ENCODE measurements at regions of chr10 and their contacts with region 1.

Region 1: DNA sequence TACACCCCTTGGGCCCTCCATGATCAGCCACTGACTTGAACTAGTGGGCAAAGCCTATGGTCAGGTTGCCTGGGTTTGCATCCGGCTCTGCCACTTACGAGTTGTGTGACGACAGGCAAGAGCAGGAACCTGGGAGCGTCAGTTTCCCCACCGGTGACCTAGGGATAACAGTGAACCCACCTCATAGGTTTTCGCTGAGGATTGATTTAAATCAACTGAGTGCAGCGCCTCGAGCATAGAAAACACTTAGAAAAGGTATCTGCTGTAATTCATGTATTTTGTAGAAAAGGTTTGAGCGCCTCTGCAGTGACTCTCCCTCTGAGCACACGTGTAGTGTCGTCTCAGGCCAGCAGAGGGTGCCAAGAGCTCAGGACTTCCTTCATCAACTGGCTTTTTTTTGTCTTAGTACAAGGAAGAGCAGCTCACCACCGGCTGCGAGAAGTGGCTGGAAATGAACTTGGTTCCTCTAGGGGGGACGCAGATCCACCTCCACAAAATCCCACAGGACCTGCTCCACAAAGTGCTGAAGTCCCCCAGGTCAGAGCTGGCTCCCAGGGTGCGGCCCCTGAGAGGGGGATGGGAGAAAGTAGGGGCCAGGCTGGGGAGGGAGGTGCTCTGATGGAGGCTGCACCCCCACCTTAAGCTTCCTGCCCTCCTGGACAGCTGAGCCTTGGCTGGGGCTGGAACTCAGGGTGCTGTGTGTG is 27.7 kb downstream of the BTBD16 start:
- DNase-seq: peak; percentile 39 to 65 (median 48)
- H3K4me3 ChIP-seq: no peak overlapping the region
- H3K4me3 Mint-ChIP-seq: peak overlapping the region in 5 of 7 donors; percentile 35 to 86 (median 59)
- H3K27ac ChIP-seq: no peak overlapping the region
- H3K27ac Mint-ChIP-seq: peak overlapping the region in 5 of 8 donors; percentile 7 to 92 (median 52)
- H3K4me1 ChIP-seq: peaks cover 13% of the 10 kb centered on the region
- H3K4me1 Mint-ChIP-seq: peaks cover 12 to 20% (median 13%) of the 10 kb centered on the region in 3 donors
- H3K27me3 ChIP-seq: no peaks in the 10 kb centered on the region
- H3K27me3 Mint-ChIP-seq: peaks cover 6 to 14% of the 10 kb centered on the region in 2 donors

Region 2: DNA sequence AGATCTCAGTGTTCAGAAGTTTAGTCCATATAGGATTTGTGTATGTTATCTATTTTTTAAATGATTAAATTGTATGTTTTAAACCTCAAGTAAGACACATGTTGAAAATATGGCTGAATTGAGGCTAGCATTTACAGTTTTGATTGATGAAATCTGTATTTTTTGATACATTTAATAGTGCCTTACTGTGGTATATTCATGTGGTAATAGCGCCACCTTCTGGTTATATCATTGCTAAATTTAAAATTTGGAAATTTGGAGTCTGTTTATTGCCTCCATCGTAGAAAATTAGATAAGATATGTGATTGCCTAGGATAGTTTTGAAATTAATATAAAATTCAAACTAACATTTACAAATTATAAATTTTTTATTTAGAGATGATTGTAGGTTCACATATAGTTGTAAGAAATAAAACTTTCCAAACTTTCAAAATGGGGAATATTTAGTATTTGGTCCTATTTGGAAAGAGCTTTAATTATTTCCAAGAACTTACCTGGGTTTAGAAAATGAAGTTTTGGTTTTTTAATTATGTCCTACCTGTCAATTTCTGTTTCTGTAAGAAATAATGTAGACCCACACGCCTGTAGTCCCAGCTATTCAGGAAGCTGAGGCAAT is 136.6 kb after region 1 on chr10:
- CTCF ChIA-PET with region 1: interaction called, 29 read pairs
- POLR2A ChIA-PET with region 1: no interaction called
- DNase-seq: peak in 2 of 5 donors; percentile 44 to 49
- H3K4me3 ChIP-seq: no peak overlapping the region
- H3K4me3 Mint-ChIP-seq: no peak overlapping the region
- H3K27ac ChIP-seq: no peak overlapping the region
- H3K27ac Mint-ChIP-seq: peak overlapping the region in 3 of 8 donors; percentile 54 to 74 (median 61)
- H3K4me1 ChIP-seq: no peaks in the 10 kb centered on the region
- H3K4me1 Mint-ChIP-seq: peaks cover 7 to 8% (median 8%) of the 10 kb centered on the region in 3 donors
- H3K27me3 ChIP-seq: no peaks in the 10 kb centered on the region
- H3K27me3 Mint-ChIP-seq: peaks cover 0 to 1% of the 10 kb centered on the region in 2 donors

Measured in CD8-positive, alpha-beta memory T cell (primary cell).